Aorta (tissue), 5 donors: ENCODE measurements at regions of chr14 and their contacts with region 1.

Region 1: GRCh38 chr14:38867561-38868150 is 235.4 kb downstream of the SEC23A start:
- DNase-seq: peak in 1 of 2 donors; percentile 71
- ATAC-seq: peak; percentile 90
- H3K4me3 ChIP-seq: no peak overlapping the region
- H3K27ac ChIP-seq: no peak overlapping the region
- H3K4me1 ChIP-seq: no peaks in the 10 kb centered on the region
- H3K27me3 ChIP-seq: no peaks in the 10 kb centered on the region

Region 2: DNA sequence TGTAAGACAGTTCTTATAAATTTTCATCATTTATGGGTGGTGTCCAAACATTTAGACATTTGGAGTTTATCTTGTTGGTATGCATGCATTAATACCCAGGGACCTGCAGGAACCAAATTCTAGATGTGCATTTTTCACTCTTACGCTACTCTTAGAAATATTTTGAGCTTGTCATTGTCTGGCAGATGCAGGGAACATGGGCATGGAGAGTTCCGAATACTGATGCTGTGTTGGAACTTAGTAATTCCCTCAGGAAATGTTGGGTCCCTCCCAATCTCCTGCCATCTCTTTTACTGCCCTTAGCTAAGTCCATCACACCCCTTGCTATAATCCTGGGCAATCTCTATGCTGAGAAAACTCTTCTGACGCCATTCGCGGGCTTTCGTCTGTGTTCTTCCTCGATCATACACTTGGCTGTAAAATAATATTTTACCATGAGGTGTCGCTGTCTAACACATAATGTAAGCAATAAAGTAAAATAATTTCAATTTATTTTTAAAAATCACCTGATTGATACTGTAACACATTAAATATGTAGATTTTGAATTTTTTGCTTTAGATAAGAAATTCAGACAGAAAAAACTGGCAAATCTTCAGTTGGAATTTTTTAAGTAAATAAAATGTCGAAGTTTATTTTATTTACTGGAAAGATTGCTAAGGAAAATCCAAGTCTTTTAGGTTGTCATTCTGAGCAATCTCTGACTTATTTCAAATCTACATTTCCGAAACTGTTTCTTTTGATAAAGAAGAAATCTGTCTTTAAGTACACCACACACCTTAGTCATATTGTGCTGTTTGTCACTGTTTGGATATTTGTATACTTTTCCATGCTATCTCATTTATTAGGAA is 964.1 kb before region 1 on chr14:
- intact Hi-C with region 1: loop called in 1 of 2 experiments (anchors 10 kb)
- DNase-seq: no peak
- ATAC-seq: no peak
- H3K4me3 ChIP-seq: no peak overlapping the region
- H3K27ac ChIP-seq: no peak overlapping the region
- H3K4me1 ChIP-seq: no peaks in the 10 kb centered on the region
- H3K27me3 ChIP-seq: no peaks in the 10 kb centered on the region

Region 3: DNA sequence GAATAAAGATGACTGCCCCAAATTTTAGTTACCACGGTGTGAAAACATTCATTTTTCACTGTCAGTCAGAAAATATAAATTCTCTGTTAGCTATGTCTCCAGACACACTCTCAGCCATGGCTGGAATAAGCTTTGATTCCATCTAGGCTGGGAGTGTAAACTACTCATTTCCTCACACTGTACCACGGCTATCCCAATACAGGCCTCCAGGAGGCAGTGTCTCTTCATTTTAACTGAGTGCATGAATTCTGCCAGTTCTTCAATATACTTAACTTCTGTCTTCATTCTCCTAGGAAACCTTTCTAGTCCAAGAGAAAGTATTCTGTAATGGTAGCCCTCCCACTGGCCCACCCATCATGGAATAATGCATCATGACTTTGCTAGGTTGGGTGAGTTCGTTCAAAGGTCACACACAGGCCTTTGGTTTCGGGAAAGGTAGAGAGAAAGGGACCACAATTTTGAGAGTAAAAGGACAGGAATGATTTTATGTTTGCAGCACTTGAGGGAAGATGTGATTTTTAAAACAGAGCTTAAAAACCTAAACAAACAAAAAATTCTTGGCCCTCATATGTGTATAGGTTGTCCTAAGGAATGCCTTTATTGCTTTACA is 145.7 kb before region 1 on chr14:
- intact Hi-C with region 1: loop called (anchors 2 kb)
- DNase-seq: peak; percentile 69 to 71
- ATAC-seq: peak; percentile 86
- H3K4me3 ChIP-seq: no peak overlapping the region
- H3K27ac ChIP-seq: no peak overlapping the region
- H3K4me1 ChIP-seq: peaks cover 0 to 1% of the 10 kb centered on the region in 2 donors
- H3K27me3 ChIP-seq: no peaks in the 10 kb centered on the region